ENCODE measurements at regions of chr7 and their contacts with region 1.

Region 1: GRCh38 chr7:16918288-16918895 is 36.6 kb upstream of the AGR3 start:
- DNase-seq: peak in 1 of 2 experiments; percentile 45
- H3K4me3 ChIP-seq: no peak overlapping the region
- H3K27ac ChIP-seq: no peak overlapping the region
- H3K4me1 ChIP-seq: peaks cover 86% of the 10 kb centered on the region
- H3K27me3 ChIP-seq: no peaks in the 10 kb centered on the region
- CTCF ChIP-seq: peak; percentile 96

Region 2: DNA sequence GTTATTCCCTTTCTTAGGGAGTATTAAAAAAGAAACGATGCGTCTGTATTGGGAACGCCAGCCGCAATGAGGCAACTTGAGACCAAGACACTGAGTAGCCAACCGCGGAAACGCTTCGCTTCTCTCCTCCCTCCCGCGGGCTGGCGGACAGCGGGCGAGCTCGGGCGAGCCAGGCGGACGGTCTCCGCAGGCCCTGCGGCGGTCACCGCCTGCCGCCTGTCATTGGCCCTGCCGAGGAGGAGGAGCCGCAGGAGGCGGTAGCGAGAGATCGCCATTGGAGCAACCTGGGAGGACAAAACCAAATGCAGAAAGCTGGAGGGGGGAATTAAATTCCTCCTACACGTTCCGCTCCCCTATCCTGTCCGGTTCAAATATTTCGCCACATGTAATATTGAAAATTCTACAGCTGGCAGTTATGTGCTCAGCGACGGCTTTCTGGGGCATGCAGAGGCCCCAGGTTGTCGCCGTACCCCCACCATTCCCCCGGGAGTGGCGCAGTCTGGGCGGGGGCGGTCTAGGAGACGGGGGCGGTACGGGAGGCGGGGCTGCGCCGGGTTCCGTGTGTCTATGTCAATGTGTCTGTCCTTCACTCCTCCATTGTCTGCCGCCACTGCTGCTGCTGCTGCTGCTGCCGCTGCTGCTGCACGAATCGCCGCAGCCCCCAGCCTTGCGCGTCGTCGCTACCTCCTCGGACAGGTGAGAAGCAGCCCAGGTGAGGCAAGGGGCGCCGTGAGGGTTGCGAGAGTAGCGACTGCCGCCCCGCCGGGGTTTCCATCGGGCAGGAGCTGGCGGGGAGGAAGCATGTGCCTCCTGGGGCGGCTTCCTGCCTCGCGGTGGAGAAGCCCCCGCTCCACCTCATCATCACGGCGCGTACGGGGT is 272.6 kb before region 1 on chr7 and contains the starts of genes ANKMY2 and BZW2:
- CTCF ChIA-PET with region 1: no interaction called
- POLR2A ChIA-PET with region 1: no interaction called
- intact Hi-C with region 1: loop called (anchors 5 kb)
- DNase-seq: peak; percentile 96 to 98
- H3K4me3 ChIP-seq: peak within 1 kb of the TSS; percentile 77
- H3K27ac ChIP-seq: peak within 1 kb of the TSS; percentile 82
- H3K4me1 ChIP-seq: peaks cover 51% of the 10 kb centered on the region
- H3K27me3 ChIP-seq: no peaks in the 10 kb centered on the region
- CTCF ChIP-seq: no peak
- total RNA-seq, gene ANKMY2: 22.9 and 30.7 TPM in 2 replicates
- total RNA-seq, gene BZW2: 93.7 and 102 TPM in 2 replicates

Region 3: GRCh38 chr7:16801111-16801542 is 117.3 kb before region 1 on chr7:
- CTCF ChIA-PET with region 1: interaction called, 18 read pairs
- POLR2A ChIA-PET with region 1: no interaction called
- intact Hi-C with region 1: loop called (anchors 1 kb)
- DNase-seq: peak; percentile 15 to 79
- H3K4me3 ChIP-seq: no peak overlapping the region
- H3K27ac ChIP-seq: no peak overlapping the region
- H3K4me1 ChIP-seq: peaks cover 50% of the 10 kb centered on the region
- H3K27me3 ChIP-seq: no peaks in the 10 kb centered on the region
- CTCF ChIP-seq: peak; percentile 85

Region 4: GRCh38 chr7:16905300-16906044 is 12.9 kb before region 1 on chr7:
- CTCF ChIA-PET with region 1: interaction called, 8 read pairs
- POLR2A ChIA-PET with region 1: no interaction called
- intact Hi-C with region 1: loop called (anchors 1 kb)
- DNase-seq: peak in 1 of 2 experiments; percentile 71
- H3K4me3 ChIP-seq: no peak overlapping the region
- H3K27ac ChIP-seq: peak overlapping the region; percentile 58
- H3K4me1 ChIP-seq: peaks cover 18% of the 10 kb centered on the region
- H3K27me3 ChIP-seq: no peaks in the 10 kb centered on the region
- CTCF ChIP-seq: no peak

Region 5: GRCh38 chr7:17370092-17370491 is 451.7 kb after region 1 on chr7:
- CTCF ChIA-PET with region 1: no interaction called
- POLR2A ChIA-PET with region 1: no interaction called
- intact Hi-C with region 1: loop called (anchors 5 kb)
- DNase-seq: peak; percentile 56 to 76
- H3K4me3 ChIP-seq: no peak overlapping the region
- H3K27ac ChIP-seq: peak overlapping the region; percentile 94
- H3K4me1 ChIP-seq: peaks cover 51% of the 10 kb centered on the region
- H3K27me3 ChIP-seq: no peaks in the 10 kb centered on the region
- CTCF ChIP-seq: no peak

Measured in PC-9 (cell line).